Right cardiac atrium (tissue), 5 donors: ENCODE measurements at regions of chr12 and their contacts with region 1.

Region 1: GRCh38 chr12:52667511-52667910 is 12.7 kb downstream of the KRT1 start:
- DNase-seq: no peak
- ATAC-seq: no peak
- H3K4me3 ChIP-seq: no peak overlapping the region
- H3K27ac ChIP-seq: no peak overlapping the region
- H3K4me1 ChIP-seq: no peaks in the 10 kb centered on the region
- H3K27me3 ChIP-seq: peaks cover 4% of the 10 kb centered on the region

Region 2: DNA sequence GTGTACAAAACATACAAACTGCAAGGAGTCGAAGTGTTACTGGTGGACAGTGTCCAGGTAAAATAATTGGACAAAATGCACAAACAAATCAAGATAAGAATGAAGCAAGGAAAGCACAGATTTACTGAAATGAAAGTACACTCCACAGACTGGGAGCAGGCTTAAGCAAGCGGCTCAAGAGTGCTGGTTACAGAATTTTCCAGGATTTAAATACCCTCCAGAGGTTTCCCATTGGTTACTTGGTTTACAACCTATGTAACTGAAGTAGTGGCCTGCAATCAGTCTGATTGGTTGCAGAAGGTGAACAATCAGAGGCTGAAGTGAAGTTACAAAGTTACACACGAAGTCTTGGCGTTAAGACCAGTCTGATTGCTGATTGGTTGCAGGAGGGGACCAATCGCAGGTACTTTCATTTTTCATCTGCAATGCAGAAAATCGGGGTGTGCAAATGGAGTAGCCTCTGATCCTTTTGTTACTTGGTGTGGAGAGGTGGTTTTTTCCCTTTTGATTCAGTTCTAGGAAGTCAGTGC is 1088.1 kb before region 1 on chr12:
- intact Hi-C with region 1: no loop called
- DNase-seq: no peak
- ATAC-seq: no peak
- H3K4me3 ChIP-seq: no peak overlapping the region
- H3K27ac ChIP-seq: no peak overlapping the region
- H3K4me1 ChIP-seq: no peaks in the 10 kb centered on the region
- H3K27me3 ChIP-seq: no peaks in the 10 kb centered on the region

Region 3: GRCh38 chr12:52604859-52605258 is 62.7 kb before region 1 on chr12:
- intact Hi-C with region 1: no loop called
- DNase-seq: no peak
- ATAC-seq: no peak
- H3K4me3 ChIP-seq: no peak overlapping the region
- H3K27ac ChIP-seq: no peak overlapping the region
- H3K4me1 ChIP-seq: no peaks in the 10 kb centered on the region
- H3K27me3 ChIP-seq: no peaks in the 10 kb centered on the region

Region 4: GRCh38 chr12:52879394-52880351 is 212.2 kb after region 1 on chr12:
- intact Hi-C with region 1: loop called in 1 of 4 experiments (anchors 10 kb)
- DNase-seq: peak; percentile 76 to 91 (median 89)
- ATAC-seq: peak; percentile 86
- H3K4me3 ChIP-seq: no peak overlapping the region
- H3K27ac ChIP-seq: no peak overlapping the region
- H3K4me1 ChIP-seq: no peaks in the 10 kb centered on the region
- H3K27me3 ChIP-seq: no peaks in the 10 kb centered on the region